ENCODE measurements at regions of chr12 and their contacts with region 1.

Region 1: DNA sequence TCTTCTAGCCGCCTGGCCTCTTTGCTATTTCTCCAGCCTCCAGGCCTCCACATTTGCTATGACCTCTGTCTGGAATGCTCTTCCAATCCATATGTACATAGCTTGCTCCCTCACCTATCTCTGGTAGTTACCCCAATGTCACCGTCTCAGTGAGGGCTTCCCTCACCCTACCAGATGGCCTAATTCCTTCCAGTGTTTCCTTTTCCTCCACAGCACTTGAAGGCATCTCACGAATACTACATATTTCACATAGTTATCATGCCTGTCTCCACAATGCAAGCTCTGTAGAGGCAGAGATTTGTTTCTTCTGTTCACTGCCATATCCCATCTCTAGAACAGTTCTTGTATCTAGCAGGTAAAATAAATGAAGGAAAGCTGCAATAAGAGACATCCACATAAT is 21.3 kb upstream of the HSP90B1 start:
- DNase-seq: no peak
- CTCF ChIP-seq: no peak

Region 2: GRCh38 chr12:103924761-103925641 is 16.1 kb after region 1 on chr12:
- CTCF ChIA-PET with region 1: interaction called, 28 read pairs
- POLR2A ChIA-PET with region 1: interaction called, 18 read pairs
- DNase-seq: peak; percentile 60
- CTCF ChIP-seq: no peak

Region 3: GRCh38 chr12:103930034-103930786 is 21.3 kb after region 1 on chr12 and contains the start of gene HSP90B1:
- CTCF ChIA-PET with region 1: interaction called, 28 read pairs
- POLR2A ChIA-PET with region 1: interaction called, 18 read pairs
- DNase-seq: peak; percentile 99
- CTCF ChIP-seq: no peak

Region 4: DNA sequence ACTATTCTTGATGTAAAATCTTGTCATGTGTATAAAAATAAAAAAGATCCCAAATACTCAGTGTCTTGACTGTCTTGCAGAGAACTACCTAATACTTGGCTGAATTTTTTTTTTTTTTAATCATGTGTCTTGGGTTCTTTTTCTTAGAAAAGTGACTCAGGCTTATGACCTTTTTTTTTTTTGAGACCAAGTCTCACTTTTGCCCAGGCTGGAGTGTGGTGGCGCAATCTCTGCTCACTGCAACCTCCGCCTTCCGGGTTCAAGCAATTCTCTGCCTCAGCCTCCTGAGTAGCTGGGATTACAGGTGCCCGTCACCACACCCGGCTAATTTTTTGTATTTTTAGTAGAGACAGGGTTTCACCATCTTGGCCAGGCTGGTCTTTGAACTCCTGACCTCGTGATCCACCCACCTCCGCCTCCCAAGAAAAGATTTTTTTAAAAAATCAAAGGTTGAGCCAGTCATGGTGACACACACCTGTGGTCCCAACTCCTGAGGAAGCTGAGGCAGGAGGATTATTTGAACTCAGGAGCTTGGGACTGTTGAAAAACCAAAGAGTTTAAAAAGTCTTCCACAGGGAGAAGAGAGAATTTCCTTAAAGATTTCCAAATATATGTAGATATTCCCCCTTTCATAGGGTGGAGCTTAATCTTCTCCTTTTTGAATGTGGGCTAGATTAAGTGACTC is 39.1 kb after region 1 on chr12:
- CTCF ChIA-PET with region 1: no interaction called
- POLR2A ChIA-PET with region 1: no interaction called
- DNase-seq: no peak
- CTCF ChIP-seq: no peak